ENCODE measurements at regions of chr6 and their contacts with region 1.

Region 1: GRCh38 chr6:82772851-82773717 is 292.6 kb downstream of the UBE3D start:
- DNase-seq: no peak
- H3K4me3 ChIP-seq: no peak overlapping the region
- H3K27ac ChIP-seq: no peak overlapping the region
- H3K4me1 ChIP-seq: peaks cover 0 to 2% (median under 1%) of the 10 kb centered on the region in 4 experiments; a peak in 1 of 7 replicates
- H3K27me3 ChIP-seq: no peaks in the 10 kb centered on the region
- CTCF ChIP-seq: no peak
- EP300 ChIP-seq: no peak
- POLR2A ChIP-seq: no peak
- RAD21 ChIP-seq: no peak

Region 2: DNA sequence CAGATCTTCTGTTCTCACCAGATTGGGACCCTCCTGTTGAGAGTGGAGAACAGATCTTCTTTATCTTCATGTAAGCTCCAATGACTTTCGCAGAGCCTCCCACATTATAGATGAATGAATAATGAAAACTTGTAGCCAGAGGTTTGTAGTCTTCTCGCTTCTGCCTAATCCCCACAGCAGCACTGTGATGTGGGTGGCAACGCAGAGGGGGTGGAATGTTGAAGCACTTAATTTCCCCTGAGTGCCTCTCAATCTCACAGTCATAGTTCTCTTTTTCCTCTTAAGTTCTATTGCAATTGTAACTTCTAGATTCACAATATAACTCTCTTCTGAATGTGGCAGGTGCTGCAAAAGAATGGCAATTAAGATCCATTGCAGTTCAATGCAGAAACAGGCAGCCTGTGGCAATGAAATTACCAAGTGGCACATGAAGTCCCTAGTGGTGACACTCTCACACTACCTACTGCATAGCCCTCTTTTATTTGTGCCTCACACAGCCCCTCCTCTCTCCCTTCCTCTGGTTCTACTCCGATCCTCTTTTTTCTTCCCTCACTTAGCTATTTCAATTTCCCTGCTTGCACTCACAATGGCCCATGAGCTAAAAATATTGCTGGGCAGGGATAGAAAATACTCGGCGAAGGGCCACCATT is 10.6 kb after region 1 on chr6:
- CTCF ChIA-PET with region 1: interaction called, 14 read pairs
- POLR2A ChIA-PET with region 1: no interaction called
- DNase-seq: no peak
- H3K4me3 ChIP-seq: no peak overlapping the region
- H3K27ac ChIP-seq: no peak overlapping the region
- H3K4me1 ChIP-seq: no peaks in the 10 kb centered on the region; a peak in 1 of 7 replicates
- H3K27me3 ChIP-seq: no peaks in the 10 kb centered on the region
- CTCF ChIP-seq: peak; percentile 18 to 83 (median 55)
- EP300 ChIP-seq: no peak
- POLR2A ChIP-seq: no peak
- RAD21 ChIP-seq: peak; percentile 64 to 69

Region 3: DNA sequence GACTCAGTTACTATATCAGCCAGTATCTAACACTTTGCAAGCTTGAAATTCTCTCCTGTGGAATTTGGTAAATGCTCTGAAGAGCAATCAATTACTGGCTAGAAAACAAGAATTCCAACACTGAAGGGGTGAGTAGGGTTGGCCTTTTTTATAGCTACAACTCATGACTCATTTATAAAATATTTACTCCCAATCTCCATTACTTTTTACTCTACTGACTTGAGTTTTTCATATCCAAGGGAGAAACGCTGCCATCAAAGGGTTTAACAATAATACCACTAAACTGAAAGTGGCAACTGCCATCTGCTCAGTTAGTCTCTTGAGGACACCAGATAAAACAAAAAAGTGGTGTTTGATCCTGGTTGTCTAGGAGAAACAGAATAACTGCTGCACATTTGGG is 89.5 kb after region 1 on chr6:
- CTCF ChIA-PET with region 1: no interaction called
- POLR2A ChIA-PET with region 1: no interaction called
- DNase-seq: no peak
- H3K4me3 ChIP-seq: no peak overlapping the region
- H3K27ac ChIP-seq: no peak overlapping the region
- H3K4me1 ChIP-seq: no peaks in the 10 kb centered on the region
- H3K27me3 ChIP-seq: no peaks in the 10 kb centered on the region
- CTCF ChIP-seq: no peak
- EP300 ChIP-seq: no peak
- POLR2A ChIP-seq: no peak
- RAD21 ChIP-seq: no peak